Activated CD4-positive, alpha-beta memory T cell treated with anti-CD3 and anti-CD28 coated beads for 36 hours (primary cell): ENCODE measurements at regions of chr1 and their contacts with region 1.

Region 1: DNA sequence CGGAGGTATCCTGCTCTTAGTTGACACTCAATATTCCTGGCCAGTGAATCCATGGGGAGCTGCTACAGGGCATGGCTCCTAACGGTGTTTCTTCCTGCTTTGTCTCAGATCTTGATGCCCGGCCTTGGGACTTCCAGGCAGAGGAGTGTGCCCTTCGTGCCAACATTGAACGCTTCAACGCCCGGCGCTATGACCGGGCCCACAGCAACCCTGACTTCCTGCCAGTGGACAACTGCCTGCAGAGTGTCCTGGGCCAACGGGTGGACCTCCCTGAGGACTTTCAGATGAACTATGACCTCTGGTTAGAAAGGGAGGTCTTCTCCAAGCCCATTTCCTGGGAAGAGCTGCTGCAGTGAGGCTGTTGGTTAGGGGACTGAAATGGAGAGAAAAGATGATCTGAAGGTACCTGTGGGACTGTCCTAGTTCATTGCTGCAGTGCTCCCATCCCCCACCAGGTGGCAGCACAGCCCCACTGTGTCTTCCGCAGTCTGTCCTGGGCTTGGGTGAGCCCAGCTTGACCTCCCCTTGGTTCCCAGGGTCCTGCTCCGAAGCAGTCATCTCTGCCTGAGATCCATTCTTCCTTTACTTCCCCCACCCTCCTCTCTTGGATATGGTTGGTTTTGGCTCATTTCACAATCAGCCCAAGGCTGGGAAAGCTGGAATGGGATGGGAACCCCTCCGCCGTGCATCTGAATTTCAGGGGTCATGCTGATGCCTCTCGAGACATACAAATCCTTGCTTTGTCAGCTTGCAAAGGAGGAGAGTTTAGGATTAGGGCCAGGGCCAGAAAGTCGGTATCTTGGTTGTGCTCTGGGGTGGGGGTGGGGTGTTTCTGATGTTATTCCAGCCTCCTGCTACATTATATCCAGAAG is 16.7 kb downstream of the ALX3 start:
- DNase-seq: peak; percentile 79
- H3K4me3 Mint-ChIP-seq: no peak overlapping the region
- H3K27ac Mint-ChIP-seq: no peak overlapping the region
- H3K4me1 Mint-ChIP-seq: no peaks in the 10 kb centered on the region
- H3K27me3 Mint-ChIP-seq: no peaks in the 10 kb centered on the region

Region 2: DNA sequence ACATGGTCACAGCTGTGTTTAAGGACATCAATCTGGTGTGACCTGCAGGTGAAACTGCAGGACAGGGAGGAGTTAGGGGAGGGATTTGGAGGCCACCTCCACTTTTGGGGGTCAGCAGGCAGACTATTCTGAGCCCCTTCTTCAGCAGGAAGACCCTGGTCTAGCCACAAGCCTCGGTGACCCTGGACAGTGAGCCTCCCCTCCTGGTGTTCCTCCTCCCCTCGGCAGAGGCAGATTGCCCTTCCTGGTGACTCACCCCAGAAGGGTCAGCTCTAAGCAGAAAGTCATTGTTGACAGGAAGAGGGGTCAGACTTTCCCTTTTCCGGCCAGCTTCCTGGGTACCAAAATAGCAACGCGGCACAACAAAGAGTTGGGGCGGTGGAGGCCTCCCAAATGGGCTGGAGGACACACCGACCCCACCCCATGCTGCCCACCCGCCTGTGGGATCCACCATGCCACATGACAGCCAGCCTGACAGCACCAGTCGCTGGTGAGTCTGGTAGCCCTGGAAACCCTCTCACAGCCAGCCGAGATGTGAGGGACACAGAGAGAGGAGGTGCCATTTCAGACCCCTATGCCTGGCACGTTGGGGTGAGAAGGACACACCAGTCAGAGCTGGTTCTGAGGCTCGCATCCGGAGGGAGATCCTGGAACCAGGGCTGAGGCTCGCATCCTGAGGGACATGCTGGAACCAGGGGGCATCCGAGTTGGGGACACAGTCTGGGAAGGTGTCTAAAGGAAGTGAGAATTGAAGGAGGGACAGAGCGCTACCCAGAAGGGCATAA is 157.9 kb before region 1 on chr1:
- CTCF ChIA-PET with region 1: no interaction called
- POLR2A ChIA-PET with region 1: no interaction called
- intact Hi-C with region 1: no loop called
- DNase-seq: peak; percentile 60
- H3K4me3 Mint-ChIP-seq: no peak overlapping the region
- H3K27ac Mint-ChIP-seq: peak overlapping the region; percentile 28
- H3K4me1 Mint-ChIP-seq: peaks cover 15% of the 10 kb centered on the region
- H3K27me3 Mint-ChIP-seq: peaks cover 2% of the 10 kb centered on the region

Region 3: GRCh38 chr1:110082477-110082876 is 28.7 kb after region 1 on chr1:
- CTCF ChIA-PET with region 1: interaction called, 25 read pairs
- POLR2A ChIA-PET with region 1: no interaction called
- intact Hi-C with region 1: no loop called
- DNase-seq: no peak
- H3K4me3 Mint-ChIP-seq: no peak overlapping the region
- H3K27ac Mint-ChIP-seq: no peak overlapping the region
- H3K4me1 Mint-ChIP-seq: peaks cover 10% of the 10 kb centered on the region
- H3K27me3 Mint-ChIP-seq: peaks cover 50% of the 10 kb centered on the region

Region 4: DNA sequence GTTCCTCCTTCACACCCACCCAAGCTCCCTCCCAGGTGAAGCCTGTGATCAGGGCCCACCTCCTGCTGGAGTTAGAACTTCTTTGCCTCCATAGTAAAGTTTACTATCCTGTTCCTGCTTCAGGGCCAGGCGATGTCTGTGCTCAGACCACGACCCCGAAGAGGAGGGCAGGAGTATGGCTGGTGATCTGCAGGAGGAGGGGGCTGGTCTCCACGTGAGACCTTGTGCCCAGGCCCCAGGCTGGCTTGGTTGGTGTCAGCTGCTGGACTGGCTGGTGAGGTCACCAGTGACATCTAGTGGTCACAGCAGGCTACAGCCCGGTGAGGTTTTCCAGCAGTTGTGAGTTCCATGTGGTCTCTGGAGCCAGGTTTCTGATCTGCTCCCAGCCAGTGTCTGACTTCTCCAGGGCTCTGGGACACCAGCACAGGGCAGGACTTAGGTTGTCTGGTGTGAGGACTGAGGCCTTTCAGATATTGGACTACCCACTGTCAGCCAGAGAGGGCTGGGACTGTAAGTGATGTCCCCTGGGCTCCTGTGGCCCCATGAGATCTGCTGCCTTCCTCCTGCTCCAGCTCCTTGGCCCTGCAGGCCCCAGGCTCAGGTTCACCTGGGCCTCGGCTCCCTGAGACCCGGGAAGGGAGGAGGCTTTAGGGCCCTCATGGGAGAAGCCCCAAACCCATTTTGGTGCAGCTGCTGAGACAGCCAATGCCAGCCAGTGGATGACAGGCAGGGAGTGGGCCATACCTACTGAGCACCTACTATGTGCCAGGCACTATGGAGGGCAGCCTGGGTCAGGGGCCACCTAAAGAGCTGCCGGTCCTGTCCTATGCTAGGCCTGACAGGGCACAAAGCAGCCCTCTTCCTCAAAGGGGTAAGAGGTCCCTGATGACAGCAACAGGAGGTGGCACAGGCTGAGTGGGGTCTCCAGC is 52.5 kb after region 1 on chr1:
- CTCF ChIA-PET with region 1: interaction called, 115 read pairs
- POLR2A ChIA-PET with region 1: no interaction called
- intact Hi-C with region 1: loop called (anchors 5 kb)
- DNase-seq: peak; percentile 77
- H3K4me3 Mint-ChIP-seq: no peak overlapping the region
- H3K27ac Mint-ChIP-seq: no peak overlapping the region
- H3K4me1 Mint-ChIP-seq: no peaks in the 10 kb centered on the region
- H3K27me3 Mint-ChIP-seq: no peaks in the 10 kb centered on the region

Region 5: GRCh38 chr1:110118636-110119615 is 65.1 kb after region 1 on chr1:
- CTCF ChIA-PET with region 1: interaction called, 29 read pairs
- POLR2A ChIA-PET with region 1: no interaction called
- intact Hi-C with region 1: no loop called
- DNase-seq: peak; percentile 39
- H3K4me3 Mint-ChIP-seq: no peak overlapping the region
- H3K27ac Mint-ChIP-seq: no peak overlapping the region
- H3K4me1 Mint-ChIP-seq: peaks cover 4% of the 10 kb centered on the region
- H3K27me3 Mint-ChIP-seq: peaks cover 19% of the 10 kb centered on the region